Activated T-helper 2 cell treated with anti-CD3 and anti-CD28 coated beads, Interferon-gamma antibody, Interleukin-2, Interleukin-4, amounts not matched to agents 10 μg/mL and 5 μg/mL and 100 μg/mL, durations not matched to agents 14 hours and 24 hours and 36 hours (primary cell): ENCODE measurements at regions of chr5 and their contacts with region 1.

Region 1: DNA sequence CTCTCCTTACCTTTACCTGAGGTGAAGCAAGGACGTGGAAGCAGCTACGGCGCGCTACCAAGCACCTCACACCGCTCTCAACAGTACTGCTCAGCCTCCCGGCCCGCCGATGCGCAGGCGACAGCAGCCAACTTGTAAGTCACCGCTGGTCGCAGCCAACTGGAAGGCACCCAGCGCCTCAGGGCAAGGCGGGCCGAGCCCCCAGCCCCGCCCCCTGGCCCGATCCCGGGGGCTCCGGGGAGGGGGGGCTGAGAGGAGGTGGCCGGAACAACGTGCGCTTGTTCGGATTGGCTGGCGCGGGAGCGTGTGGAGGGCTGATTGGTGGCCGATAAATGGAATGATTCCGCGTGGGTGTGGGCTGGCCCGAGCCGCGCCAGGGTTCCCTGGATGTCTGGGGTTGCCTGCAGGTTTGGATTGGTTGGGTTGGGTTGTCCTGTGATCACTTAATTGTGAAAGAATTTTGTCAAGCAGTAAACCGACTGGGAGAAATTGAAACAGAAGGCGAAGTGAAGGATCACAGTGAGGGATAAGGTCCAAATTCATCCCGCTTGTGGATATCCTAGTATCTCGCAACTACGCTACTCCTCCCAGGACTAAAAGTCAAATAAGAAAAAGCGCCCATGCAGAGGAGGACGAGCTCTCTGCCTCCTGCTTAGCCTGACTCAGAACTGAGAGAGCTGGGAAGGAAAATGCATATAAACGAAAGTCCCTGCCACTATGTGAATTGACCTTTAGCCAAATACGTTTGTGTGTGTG is at the start of gene STARD4:
- DNase-seq: peak; percentile 93
- H3K4me3 Mint-ChIP-seq: peak within 1 kb of the TSS; percentile 92
- H3K27ac Mint-ChIP-seq: peak within 1 kb of the TSS; percentile 99
- H3K4me1 Mint-ChIP-seq: peaks cover 54% of the 10 kb centered on the region
- H3K27me3 Mint-ChIP-seq: no peaks in the 10 kb centered on the region
- total RNA-seq, gene STARD4: 222 and 230 TPM in 2 replicates

Region 2: DNA sequence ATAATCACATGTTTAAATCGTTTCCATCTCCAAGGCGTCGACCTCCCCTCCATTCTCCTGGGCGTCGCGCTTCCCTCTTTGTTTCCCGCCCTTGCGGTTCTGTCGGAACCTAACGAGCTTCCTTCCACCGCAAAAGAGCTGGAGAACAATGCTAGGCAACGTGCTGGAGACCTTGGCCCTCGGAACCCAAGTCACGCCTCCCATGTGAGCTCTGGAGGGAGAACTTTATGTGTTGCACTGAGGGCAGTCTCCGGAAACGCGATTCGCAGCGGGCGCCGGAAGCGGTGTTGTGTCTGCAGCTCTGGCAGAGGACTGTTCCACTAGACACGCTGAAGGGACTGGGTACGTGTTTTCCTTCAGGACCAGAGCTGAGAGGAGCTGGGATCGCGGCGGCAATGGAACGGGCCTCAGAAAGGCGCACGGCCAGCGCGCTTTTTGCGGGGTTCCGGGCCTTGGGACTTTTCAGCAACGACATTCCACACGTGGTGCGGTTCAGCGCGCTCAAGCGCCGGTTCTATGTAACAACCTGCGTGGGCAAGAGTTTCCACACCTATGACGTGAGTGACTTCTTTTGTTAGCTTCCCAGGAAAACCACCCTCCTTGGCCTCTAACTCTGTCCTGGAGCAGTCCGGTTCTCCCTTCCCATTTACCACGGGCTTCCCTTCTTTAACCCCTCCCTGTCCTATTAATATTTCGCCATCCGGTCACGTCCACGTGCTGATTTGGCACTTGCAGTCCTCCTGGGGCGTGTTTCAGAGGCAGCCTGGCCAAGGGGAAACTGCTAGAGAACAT is 420.3 kb before region 1 on chr5 and contains the start of gene WDR36:
- intact Hi-C with region 1: loop called (anchors 5 kb)
- DNase-seq: peak; percentile 86
- H3K4me3 Mint-ChIP-seq: peak within 1 kb of the TSS; percentile 95
- H3K27ac Mint-ChIP-seq: peak within 1 kb of the TSS; percentile 92
- H3K4me1 Mint-ChIP-seq: peaks cover 31% of the 10 kb centered on the region
- H3K27me3 Mint-ChIP-seq: peaks cover 4% of the 10 kb centered on the region
- total RNA-seq, gene WDR36: 77.9 and 79.9 TPM in 2 replicates

Region 3: DNA sequence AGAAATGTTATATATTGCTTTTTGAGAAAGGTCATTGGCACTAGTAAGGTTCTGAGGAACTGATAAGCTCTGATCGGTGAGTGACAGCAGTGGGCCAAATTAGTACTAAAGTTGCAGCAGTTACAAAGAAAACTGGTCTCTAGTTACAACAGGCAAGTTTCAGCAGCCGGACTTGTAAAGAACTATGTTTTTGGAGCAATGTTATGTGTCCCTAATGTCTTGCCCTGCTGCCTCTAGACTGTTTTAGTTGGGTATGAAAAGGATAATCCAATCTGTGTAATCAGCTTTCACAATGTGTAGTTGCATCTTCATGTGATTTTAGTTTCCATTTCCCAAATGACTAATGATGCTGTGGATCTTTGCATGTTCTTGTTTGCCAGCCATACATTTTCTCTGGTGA is 174.9 kb before region 1 on chr5:
- intact Hi-C with region 1: loop called (anchors 5 kb)
- DNase-seq: no peak
- H3K4me3 Mint-ChIP-seq: no peak overlapping the region
- H3K27ac Mint-ChIP-seq: peak overlapping the region; percentile 77
- H3K4me1 Mint-ChIP-seq: peaks cover 40% of the 10 kb centered on the region
- H3K27me3 Mint-ChIP-seq: no peaks in the 10 kb centered on the region

Region 4: DNA sequence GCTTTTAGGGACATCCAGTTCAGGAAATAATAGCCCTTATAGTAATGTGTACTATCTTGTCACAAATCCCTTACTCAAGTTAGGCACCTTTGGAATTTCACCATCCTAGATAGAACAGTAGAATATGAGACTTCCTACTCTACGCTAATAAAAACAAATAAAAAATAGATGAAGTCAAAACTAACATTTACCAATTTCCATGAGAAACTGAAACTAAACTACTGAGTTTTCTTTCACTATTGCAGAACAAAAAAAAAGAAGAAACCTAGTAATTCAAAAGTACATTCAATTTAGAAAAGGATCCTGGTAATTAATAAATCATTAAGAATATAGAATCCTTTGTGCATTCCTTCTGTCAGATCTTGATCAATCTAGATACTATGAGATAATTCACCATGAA is 14.2 kb before region 1 on chr5:
- intact Hi-C with region 1: loop called (anchors 1 kb)
- DNase-seq: no peak
- H3K4me3 Mint-ChIP-seq: no peak overlapping the region
- H3K27ac Mint-ChIP-seq: peak overlapping the region; percentile 46
- H3K4me1 Mint-ChIP-seq: peaks cover 28% of the 10 kb centered on the region
- H3K27me3 Mint-ChIP-seq: no peaks in the 10 kb centered on the region

Region 5: GRCh38 chr5:111584651-111585050 is 72.1 kb after region 1 on chr5:
- intact Hi-C with region 1: loop called (anchors 1 kb)
- DNase-seq: no peak
- H3K4me3 Mint-ChIP-seq: no peak overlapping the region
- H3K27ac Mint-ChIP-seq: peak overlapping the region; percentile 77
- H3K4me1 Mint-ChIP-seq: peaks cover 50% of the 10 kb centered on the region
- H3K27me3 Mint-ChIP-seq: no peaks in the 10 kb centered on the region

Region 6: DNA sequence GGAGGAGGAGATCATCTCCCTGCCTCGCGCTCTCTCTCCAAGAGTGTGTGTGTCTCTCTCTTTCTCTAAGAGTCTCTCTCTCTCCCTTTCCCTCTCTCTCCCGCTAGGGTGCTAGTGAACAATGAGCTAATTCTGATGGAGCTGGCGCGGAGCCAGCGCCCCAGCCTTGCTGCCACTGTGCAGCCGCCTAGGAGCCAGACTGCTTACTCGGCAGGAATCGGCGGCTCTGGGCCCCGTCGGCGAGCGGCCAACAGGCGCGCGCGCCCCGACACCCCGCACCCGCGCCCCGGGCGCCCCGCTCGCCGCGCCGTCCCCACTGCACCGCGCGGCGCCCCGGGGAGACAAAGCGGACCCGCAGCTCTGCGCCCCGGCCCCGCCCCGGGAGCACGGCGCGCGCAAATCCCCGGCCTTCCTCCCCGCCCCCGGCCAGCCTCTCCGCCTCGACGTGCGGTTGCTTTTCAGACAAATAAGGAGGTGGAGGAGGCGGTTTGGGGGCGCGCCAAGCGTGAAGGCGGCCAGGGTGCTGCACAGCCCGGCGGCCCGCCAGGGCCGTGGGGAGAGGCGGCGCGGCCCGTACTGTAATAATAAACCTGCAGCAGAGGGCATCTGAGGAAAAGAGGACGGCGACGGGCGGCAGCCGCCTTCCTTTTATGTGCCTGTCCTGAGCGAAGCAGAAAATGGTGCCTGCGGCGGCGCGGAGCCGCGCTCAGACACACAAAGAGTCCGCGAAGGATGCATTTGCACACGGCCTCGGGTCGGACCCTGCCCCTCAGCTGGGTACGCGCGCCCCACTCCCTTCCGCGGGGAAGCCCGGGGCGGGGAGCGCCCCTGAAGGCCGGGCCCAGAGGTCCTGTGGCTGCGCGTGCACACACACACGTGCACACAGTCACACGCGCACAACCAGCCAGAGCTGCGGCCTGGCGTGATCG is 245.1 kb after region 1 on chr5:
- intact Hi-C with region 1: loop called (anchors 2 kb)
- DNase-seq: peak; percentile 86
- H3K4me3 Mint-ChIP-seq: peak overlapping the region; percentile 86
- H3K27ac Mint-ChIP-seq: peak overlapping the region; percentile 92
- H3K4me1 Mint-ChIP-seq: peaks cover 31% of the 10 kb centered on the region
- H3K27me3 Mint-ChIP-seq: no peaks in the 10 kb centered on the region

Region 7: GRCh38 chr5:112154940-112155686 is 642.6 kb after region 1 on chr5:
- intact Hi-C with region 1: loop called (anchors 1 kb)
- DNase-seq: no peak
- H3K4me3 Mint-ChIP-seq: no peak overlapping the region
- H3K27ac Mint-ChIP-seq: peak overlapping the region; percentile 68
- H3K4me1 Mint-ChIP-seq: peaks cover 12% of the 10 kb centered on the region
- H3K27me3 Mint-ChIP-seq: peaks cover 7% of the 10 kb centered on the region